Caco-2 (cell line): ENCODE measurements at regions of chr12 and their contacts with region 1.

Region 1: GRCh38 chr12:45990468-45991283 is at the start of gene SCAF11:
- DNase-seq: peak; percentile 100
- H3K4me3 ChIP-seq: peak within 1 kb of the TSS; percentile 92
- H3K4me3 Mint-ChIP-seq: peak within 1 kb of the TSS; percentile 90
- H3K27ac Mint-ChIP-seq: peak within 1 kb of the TSS; percentile 88
- H3K4me1 ChIP-seq: peaks cover 32% of the 10 kb centered on the region
- H3K4me1 Mint-ChIP-seq: peaks cover 23% of the 10 kb centered on the region
- H3K27me3 ChIP-seq: no peaks in the 10 kb centered on the region
- H3K27me3 Mint-ChIP-seq: no peaks in the 10 kb centered on the region
- CTCF ChIP-seq: peak; percentile 95 to 97
- total RNA-seq, gene SCAF11: 285 and 292 TPM in 2 replicates

Region 2: GRCh38 chr12:45728630-45729232 is 261.9 kb before region 1 on chr12:
- CTCF ChIA-PET with region 1: no interaction called
- POLR2A ChIA-PET with region 1: no interaction called
- intact Hi-C with region 1: loop called (anchors 2 kb)
- DNase-seq: peak; percentile 99
- H3K4me3 ChIP-seq: peak overlapping the region; percentile 51
- H3K4me3 Mint-ChIP-seq: peak overlapping the region; percentile 79
- H3K27ac Mint-ChIP-seq: peak overlapping the region; percentile 80
- H3K4me1 ChIP-seq: peaks cover 30% of the 10 kb centered on the region
- H3K4me1 Mint-ChIP-seq: peaks cover 9% of the 10 kb centered on the region
- H3K27me3 ChIP-seq: no peaks in the 10 kb centered on the region
- H3K27me3 Mint-ChIP-seq: no peaks in the 10 kb centered on the region
- CTCF ChIP-seq: peak; percentile 91 to 95

Region 3: GRCh38 chr12:45907955-45908354 is 82.7 kb before region 1 on chr12:
- CTCF ChIA-PET with region 1: interaction called, 10 read pairs
- POLR2A ChIA-PET with region 1: interaction called, 4 read pairs
- intact Hi-C with region 1: no loop called
- DNase-seq: no peak
- H3K4me3 ChIP-seq: no peak overlapping the region
- H3K4me3 Mint-ChIP-seq: no peak overlapping the region
- H3K27ac Mint-ChIP-seq: no peak overlapping the region
- H3K4me1 ChIP-seq: no peaks in the 10 kb centered on the region
- H3K4me1 Mint-ChIP-seq: peaks cover 7% of the 10 kb centered on the region
- H3K27me3 ChIP-seq: no peaks in the 10 kb centered on the region
- H3K27me3 Mint-ChIP-seq: no peaks in the 10 kb centered on the region
- CTCF ChIP-seq: no peak

Region 4: DNA sequence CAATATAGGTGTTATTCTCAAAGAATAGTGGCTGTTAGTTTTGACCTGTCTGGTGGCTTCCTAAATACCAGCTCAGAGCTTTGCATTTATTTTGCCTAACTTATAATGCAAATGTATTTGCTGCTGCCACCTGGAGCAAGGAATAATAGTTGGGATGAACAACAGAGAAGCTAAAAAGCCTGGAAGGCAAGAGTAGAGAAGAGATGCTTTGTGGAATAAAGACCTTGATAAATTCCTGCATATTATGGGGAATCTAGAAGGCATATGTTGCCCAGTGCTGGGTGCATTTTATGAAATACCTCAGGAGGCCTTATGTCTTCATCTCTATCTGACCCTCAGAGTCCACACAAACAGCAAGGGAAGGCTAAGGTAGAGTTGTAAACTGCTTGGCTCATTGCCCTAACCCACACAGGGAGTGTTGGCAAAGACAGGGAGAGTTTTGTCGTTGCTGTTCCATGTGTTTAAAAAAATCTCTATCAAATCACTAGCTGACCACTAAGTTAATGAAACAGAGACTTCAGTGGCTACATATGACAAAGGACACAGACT is 53.4 kb after region 1 on chr12:
- CTCF ChIA-PET with region 1: interaction called, 13 read pairs
- POLR2A ChIA-PET with region 1: no interaction called
- intact Hi-C with region 1: loop called (anchors 5 kb)
- DNase-seq: no peak
- H3K4me3 ChIP-seq: no peak overlapping the region
- H3K4me3 Mint-ChIP-seq: no peak overlapping the region
- H3K27ac Mint-ChIP-seq: no peak overlapping the region
- H3K4me1 ChIP-seq: no peaks in the 10 kb centered on the region
- H3K4me1 Mint-ChIP-seq: no peaks in the 10 kb centered on the region
- H3K27me3 ChIP-seq: no peaks in the 10 kb centered on the region
- H3K27me3 Mint-ChIP-seq: peaks cover 2% of the 10 kb centered on the region
- CTCF ChIP-seq: no peak

Region 5: GRCh38 chr12:46071769-46072624 is 81.3 kb after region 1 on chr12:
- CTCF ChIA-PET with region 1: no interaction called
- POLR2A ChIA-PET with region 1: no interaction called
- intact Hi-C with region 1: loop called (anchors 1 kb)
- DNase-seq: peak; percentile 68 to 72
- H3K4me3 ChIP-seq: no peak overlapping the region
- H3K4me3 Mint-ChIP-seq: no peak overlapping the region
- H3K27ac Mint-ChIP-seq: no peak overlapping the region
- H3K4me1 ChIP-seq: no peaks in the 10 kb centered on the region
- H3K4me1 Mint-ChIP-seq: peaks cover 6% of the 10 kb centered on the region
- H3K27me3 ChIP-seq: no peaks in the 10 kb centered on the region; the same call in 1 of the 2 replicates
- H3K27me3 Mint-ChIP-seq: peaks cover 2% of the 10 kb centered on the region
- CTCF ChIP-seq: peak; percentile 92 to 96

Region 6: GRCh38 chr12:46179683-46180452 is 189.2 kb after region 1 on chr12:
- CTCF ChIA-PET with region 1: no interaction called
- POLR2A ChIA-PET with region 1: no interaction called
- intact Hi-C with region 1: loop called (anchors 5 kb)
- DNase-seq: no peak
- H3K4me3 ChIP-seq: no peak overlapping the region
- H3K4me3 Mint-ChIP-seq: no peak overlapping the region
- H3K27ac Mint-ChIP-seq: no peak overlapping the region
- H3K4me1 ChIP-seq: 0 out of 2 replicates have a peak, but pooled peaks cover 8% of the 10 kb centered on the region
- H3K4me1 Mint-ChIP-seq: no peaks in the 10 kb centered on the region
- H3K27me3 ChIP-seq: no peaks in the 10 kb centered on the region; the same call in 1 of the 2 replicates
- H3K27me3 Mint-ChIP-seq: no peaks in the 10 kb centered on the region
- CTCF ChIP-seq: no peak

Region 7: GRCh38 chr12:46372544-46373110 is 382.0 kb after region 1 on chr12 and contains the start of gene SLC38A2:
- CTCF ChIA-PET with region 1: no interaction called
- POLR2A ChIA-PET with region 1: interaction called, 7 read pairs
- intact Hi-C with region 1: loop called (anchors 5 kb)
- DNase-seq: peak; percentile 96 to 99
- H3K4me3 ChIP-seq: peak within 1 kb of the TSS; percentile 83
- H3K4me3 Mint-ChIP-seq: peak within 1 kb of the TSS; percentile 76
- H3K27ac Mint-ChIP-seq: peak within 1 kb of the TSS; percentile 100
- H3K4me1 ChIP-seq: peaks cover 45% of the 10 kb centered on the region
- H3K4me1 Mint-ChIP-seq: peaks cover 35% of the 10 kb centered on the region
- H3K27me3 ChIP-seq: no peaks in the 10 kb centered on the region
- H3K27me3 Mint-ChIP-seq: no peaks in the 10 kb centered on the region
- CTCF ChIP-seq: no peak
- total RNA-seq, gene SLC38A2: 317 and 331 TPM in 2 replicates

Region 8: GRCh38 chr12:46414591-46415268 is 424.1 kb after region 1 on chr12:
- CTCF ChIA-PET with region 1: no interaction called
- POLR2A ChIA-PET with region 1: no interaction called
- intact Hi-C with region 1: no loop called
- DNase-seq: no peak
- H3K4me3 ChIP-seq: no peak overlapping the region
- H3K4me3 Mint-ChIP-seq: no peak overlapping the region
- H3K27ac Mint-ChIP-seq: no peak overlapping the region
- H3K4me1 ChIP-seq: 0 out of 2 replicates have a peak, but pooled peaks cover 3% of the 10 kb centered on the region
- H3K4me1 Mint-ChIP-seq: peaks cover 6% of the 10 kb centered on the region
- H3K27me3 ChIP-seq: no peaks in the 10 kb centered on the region
- H3K27me3 Mint-ChIP-seq: no peaks in the 10 kb centered on the region
- CTCF ChIP-seq: no peak